ENCODE measurements at regions of chr9 and their contacts with region 1.

Region 1: GRCh38 chr9:110048403-110048975 is 159.5 kb downstream of the C9orf152 start:
- DNase-seq: peak in 1 of 2 donors; percentile 87
- H3K4me3 ChIP-seq: peak overlapping the region; percentile 73 to 80
- H3K27ac ChIP-seq: peak overlapping the region; percentile 80
- H3K4me1 ChIP-seq: peaks cover 18% of the 10 kb centered on the region
- H3K27me3 ChIP-seq: no peaks in the 10 kb centered on the region
- CTCF ChIP-seq: no peak
- POLR2A ChIP-seq: peak; percentile 16 to 82

Region 2: GRCh38 chr9:108259917-108260675 is 1788.4 kb before region 1 on chr9:
- intact Hi-C with region 1: no loop called
- DNase-seq: no peak
- H3K4me3 ChIP-seq: no peak overlapping the region
- H3K27ac ChIP-seq: peak overlapping the region; percentile 61
- H3K4me1 ChIP-seq: peaks cover 13% of the 10 kb centered on the region
- H3K27me3 ChIP-seq: no peaks in the 10 kb centered on the region
- CTCF ChIP-seq: no peak
- POLR2A ChIP-seq: no peak

Region 3: GRCh38 chr9:109994141-109994540 is 54.3 kb before region 1 on chr9:
- intact Hi-C with region 1: loop called (anchors 2 kb)
- DNase-seq: no peak
- H3K4me3 ChIP-seq: no peak overlapping the region
- H3K27ac ChIP-seq: no peak overlapping the region
- H3K4me1 ChIP-seq: no peaks in the 10 kb centered on the region
- H3K27me3 ChIP-seq: no peaks in the 10 kb centered on the region
- CTCF ChIP-seq: no peak
- POLR2A ChIP-seq: no peak

Region 4: DNA sequence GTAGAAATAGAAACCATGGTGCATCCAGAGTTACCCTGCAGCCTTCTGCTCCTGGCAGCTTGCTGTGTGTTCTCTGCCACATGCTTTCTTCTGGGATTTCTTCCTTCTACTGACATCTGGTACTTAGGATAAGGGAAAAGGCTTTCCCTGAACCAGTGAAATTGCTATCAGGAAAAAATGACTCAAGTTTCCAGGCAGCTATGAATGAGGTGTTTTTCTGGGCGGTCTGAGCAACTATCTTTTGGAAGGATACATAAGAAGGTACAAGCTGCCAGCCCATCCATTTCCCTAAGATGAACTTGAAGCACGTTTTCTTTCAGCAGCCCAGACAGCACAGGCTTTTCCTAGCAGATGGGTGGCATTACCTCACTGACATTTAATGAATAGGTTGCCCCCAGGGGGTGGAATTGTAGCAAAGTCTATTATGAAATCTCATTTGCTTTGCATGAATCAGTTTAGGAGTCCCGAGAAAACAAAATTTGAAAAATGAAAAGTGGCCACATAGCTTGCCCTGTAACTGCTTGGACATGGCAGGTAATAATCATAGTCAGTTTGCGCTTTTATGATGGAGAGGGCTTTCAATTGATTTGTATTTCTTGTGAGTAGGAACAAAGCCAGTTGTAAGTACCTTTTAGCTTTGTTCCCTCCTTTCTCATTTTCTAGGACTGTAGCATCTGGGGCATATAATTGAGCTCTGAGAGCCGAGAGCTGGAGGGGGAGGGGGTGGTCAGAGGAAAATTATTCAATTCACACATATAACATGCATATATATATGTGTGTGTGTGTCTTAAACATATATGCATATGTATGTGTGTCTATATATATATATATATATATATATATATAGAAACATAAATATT is 51.0 kb after region 1 on chr9:
- intact Hi-C with region 1: no loop called
- DNase-seq: no peak
- H3K4me3 ChIP-seq: no peak overlapping the region
- H3K27ac ChIP-seq: no peak overlapping the region
- H3K4me1 ChIP-seq: peaks cover 22% of the 10 kb centered on the region
- H3K27me3 ChIP-seq: no peaks in the 10 kb centered on the region
- CTCF ChIP-seq: no peak
- POLR2A ChIP-seq: no peak

Region 5: DNA sequence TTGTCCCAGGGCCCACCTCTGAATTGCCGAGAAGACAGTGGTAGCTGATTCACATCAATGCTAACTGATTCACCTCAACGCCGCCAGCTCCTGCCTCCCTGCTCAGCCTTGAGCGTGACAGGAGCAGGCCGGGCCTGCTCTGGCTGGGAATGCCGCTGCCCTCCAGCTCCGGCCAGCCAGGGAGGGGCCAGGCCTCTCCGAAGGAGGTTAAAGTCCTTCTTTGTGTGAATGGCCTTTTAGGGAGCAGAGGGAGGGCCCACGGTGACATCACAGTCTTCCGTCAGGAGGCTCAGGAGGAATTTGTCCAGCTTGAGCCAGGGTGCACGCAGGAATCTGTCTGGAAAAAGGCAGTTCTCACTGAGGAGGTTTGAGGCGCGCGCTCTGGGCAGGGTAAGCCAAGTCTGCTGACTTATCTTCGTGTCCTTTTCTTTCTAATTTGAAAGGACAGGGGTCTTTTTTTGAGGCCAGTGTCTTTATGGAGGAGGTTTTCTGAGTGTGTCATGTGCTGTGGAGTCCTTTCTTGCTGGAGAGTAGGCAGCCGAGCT is 76.8 kb after region 1 on chr9:
- intact Hi-C with region 1: loop called (anchors 5 kb)
- DNase-seq: peak in 1 of 2 donors; percentile 97
- H3K4me3 ChIP-seq: peak overlapping the region; percentile 18 to 33
- H3K27ac ChIP-seq: peak overlapping the region; percentile 84
- H3K4me1 ChIP-seq: peaks cover 58% of the 10 kb centered on the region
- H3K27me3 ChIP-seq: no peaks in the 10 kb centered on the region
- CTCF ChIP-seq: no peak
- POLR2A ChIP-seq: peak in 1 of 2 donors; percentile 28

Region 6: DNA sequence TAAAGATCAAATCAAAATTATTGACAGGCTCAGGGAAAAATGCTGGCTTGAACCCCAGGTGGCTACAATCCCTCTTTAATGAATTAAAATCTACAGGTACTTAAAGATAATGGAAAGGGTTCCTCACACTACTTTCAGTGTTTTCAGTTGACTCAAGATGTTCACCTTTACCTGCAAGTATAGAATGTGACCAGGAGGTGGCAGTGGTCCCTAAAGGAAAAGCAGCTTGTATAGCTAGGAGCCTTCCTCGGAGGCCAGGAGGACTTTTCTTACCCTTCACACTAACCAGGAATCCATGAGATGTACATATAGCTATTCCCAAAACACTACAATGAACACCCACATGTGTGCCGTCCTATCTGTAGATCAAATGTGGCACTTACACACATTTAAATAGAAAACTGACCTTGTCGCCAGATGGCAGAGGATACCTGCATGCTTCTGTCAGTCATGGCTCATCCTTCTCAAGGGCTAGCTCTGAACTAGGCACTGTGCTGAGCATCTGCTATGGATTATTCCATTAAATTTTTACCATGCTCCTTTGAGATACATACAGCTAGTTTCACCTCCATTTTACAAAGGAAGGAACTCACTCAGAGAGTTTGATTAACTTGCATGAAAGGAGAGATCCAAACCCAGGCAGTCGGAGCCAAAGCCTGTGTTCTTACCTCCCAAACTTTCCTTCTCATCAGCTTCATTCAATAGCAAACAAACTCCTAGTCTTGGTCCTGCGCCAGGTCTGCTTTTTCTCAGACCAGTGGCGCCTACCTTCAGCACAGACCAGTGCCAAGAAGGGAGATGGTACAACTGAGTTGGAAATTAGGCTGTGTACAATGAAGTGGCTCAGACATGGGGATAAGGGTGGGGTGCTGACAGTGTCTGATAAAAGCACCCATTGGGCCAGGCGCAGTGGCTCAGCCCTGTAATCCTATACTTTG is 135.0 kb after region 1 on chr9:
- intact Hi-C with region 1: no loop called
- DNase-seq: no peak
- H3K4me3 ChIP-seq: no peak overlapping the region
- H3K27ac ChIP-seq: no peak overlapping the region
- H3K4me1 ChIP-seq: peaks cover 11% of the 10 kb centered on the region
- H3K27me3 ChIP-seq: no peaks in the 10 kb centered on the region
- CTCF ChIP-seq: peak; percentile 49 to 79 (median 69)
- POLR2A ChIP-seq: no peak

Measured in vagina (tissue), 2 donors.